Activated T-helper 1 cell treated with anti-CD3 and anti-CD28 coated beads, Interleukin-12 subunit alpha, Interleukin-12 subunit beta, Interleukin-2, Interleukin-4 antibody, amounts not matched to agents 30 ng/mL and 10 ng/mL and 1 ng/mL, durations not matched to agents 14 hours and 24 hours and 36 hours (primary cell): ENCODE measurements at regions of chr7 and their contacts with region 1.

Region 1: GRCh38 chr7:5822742-5823503 is 41.5 kb upstream of the RNF216 start:
- DNase-seq: peak; percentile 95
- H3K4me3 Mint-ChIP-seq: peak overlapping the region; percentile 87
- H3K27ac Mint-ChIP-seq: peak overlapping the region; percentile 82
- H3K4me1 Mint-ChIP-seq: peaks cover 12% of the 10 kb centered on the region
- H3K27me3 Mint-ChIP-seq: no peaks in the 10 kb centered on the region

Region 2: DNA sequence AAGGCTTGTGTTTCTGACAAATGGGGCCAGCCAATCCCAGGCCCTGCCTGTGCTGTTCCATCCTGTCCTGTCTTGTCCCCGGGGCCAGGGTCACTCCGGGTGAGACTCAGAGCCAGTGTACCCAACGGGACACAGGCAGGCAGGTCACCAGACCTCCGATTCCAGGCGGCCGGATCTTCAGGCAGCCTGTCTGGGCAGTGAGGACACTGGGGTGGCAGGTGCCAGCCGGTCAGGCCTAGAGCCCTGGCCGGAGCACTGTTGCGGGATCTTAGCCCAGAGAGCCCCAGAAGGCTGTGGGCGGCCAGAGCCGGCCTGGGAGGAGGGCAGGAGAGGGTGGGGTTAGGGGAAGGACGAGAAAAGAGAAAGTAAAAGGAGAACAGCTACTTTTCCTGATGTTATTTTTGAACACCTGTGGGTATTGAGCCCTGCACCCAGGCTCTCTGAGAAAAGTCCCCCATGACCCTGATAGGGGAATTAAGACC is 265.0 kb before region 1 on chr7:
- intact Hi-C with region 1: loop called (anchors 2 kb)
- DNase-seq: no peak
- H3K4me3 Mint-ChIP-seq: peak overlapping the region; percentile 79
- H3K27ac Mint-ChIP-seq: peak overlapping the region; percentile 70
- H3K4me1 Mint-ChIP-seq: peaks cover 35% of the 10 kb centered on the region
- H3K27me3 Mint-ChIP-seq: peaks cover 9% of the 10 kb centered on the region

Region 3: DNA sequence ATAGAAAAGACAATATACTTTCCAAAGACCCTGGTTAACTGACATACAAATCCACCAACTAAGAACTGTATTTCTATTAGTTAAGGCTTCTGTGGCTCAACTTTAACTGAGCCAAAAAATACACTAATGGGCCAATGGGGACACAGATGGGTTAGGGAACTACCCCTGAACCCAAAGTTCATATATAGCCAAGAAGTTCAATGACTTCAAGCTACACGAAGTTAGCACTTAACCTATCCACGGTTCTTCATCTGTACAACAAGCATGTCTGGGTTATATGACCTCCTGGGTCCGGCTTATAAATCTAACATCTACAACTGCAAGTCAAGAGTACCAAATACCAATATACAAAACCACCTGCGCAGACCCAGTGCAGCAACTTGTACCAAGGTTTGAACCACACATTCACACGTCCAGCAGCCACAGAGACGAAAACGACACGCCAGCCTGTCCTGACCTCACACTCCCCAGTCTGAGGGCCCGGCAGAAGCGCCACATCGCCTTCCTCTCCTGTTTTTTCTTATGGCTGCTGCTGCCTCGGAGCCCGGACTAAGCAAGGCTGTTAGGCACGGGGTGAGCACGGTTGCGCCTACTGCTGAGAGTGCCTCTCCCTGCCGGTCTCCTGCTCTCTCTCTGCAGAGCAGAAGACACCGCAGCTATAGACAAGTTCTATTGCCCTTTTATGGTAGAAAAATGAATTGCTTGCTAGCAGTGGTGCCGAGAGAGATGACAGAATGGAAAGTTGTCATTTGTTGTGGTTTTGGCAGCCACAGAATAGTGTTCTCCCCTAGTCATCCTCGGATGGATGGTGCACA is 127.8 kb before region 1 on chr7:
- intact Hi-C with region 1: loop called (anchors 2 kb)
- DNase-seq: peak; percentile 79
- H3K4me3 Mint-ChIP-seq: peak overlapping the region; percentile 84
- H3K27ac Mint-ChIP-seq: peak overlapping the region; percentile 95
- H3K4me1 Mint-ChIP-seq: peaks cover 93% of the 10 kb centered on the region
- H3K27me3 Mint-ChIP-seq: peaks cover 25% of the 10 kb centered on the region

Region 4: DNA sequence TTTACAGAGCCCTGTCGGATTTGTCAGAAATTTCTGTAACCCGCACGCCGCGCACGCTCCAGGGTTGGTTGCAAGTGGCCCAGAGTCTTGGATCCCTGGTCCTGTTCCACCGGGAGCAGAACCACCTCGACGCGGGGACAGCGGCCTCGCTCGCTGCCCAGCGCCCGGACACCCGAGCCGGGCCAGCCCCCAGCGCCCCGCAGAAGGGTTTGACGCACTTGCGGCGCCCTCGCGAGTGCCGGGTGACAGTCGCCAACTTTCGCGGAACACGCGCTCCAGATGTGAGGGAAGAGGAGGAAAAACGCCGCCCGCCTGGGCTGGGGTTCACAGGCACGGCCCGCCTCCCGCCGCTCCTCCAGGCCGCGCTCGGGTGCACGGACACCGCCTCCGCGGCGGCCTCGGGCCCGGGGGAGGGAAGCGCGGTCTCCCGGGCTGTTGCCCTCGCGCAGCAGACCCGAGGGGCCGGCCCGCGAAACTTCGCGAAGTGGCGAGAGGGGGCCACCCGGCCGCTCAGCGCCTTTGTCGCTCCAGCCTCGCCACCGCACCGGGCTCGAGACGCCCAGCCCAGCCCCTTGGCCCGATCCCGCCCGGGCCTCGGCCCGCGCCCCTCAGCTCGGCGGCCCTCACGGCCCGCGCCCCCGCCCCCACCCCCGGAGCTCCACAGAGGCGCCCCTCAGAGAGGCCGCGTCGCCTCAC is 42.0 kb before region 1 on chr7:
- intact Hi-C with region 1: loop called (anchors 1 kb)
- DNase-seq: peak; percentile 19
- H3K4me3 Mint-ChIP-seq: peak overlapping the region; percentile 86
- H3K27ac Mint-ChIP-seq: peak overlapping the region; percentile 86
- H3K4me1 Mint-ChIP-seq: peaks cover 31% of the 10 kb centered on the region
- H3K27me3 Mint-ChIP-seq: no peaks in the 10 kb centered on the region

Region 5: GRCh38 chr7:5838761-5839500 is 16.0 kb after region 1 on chr7:
- intact Hi-C with region 1: no loop called
- DNase-seq: no peak
- H3K4me3 Mint-ChIP-seq: no peak overlapping the region
- H3K27ac Mint-ChIP-seq: no peak overlapping the region
- H3K4me1 Mint-ChIP-seq: peaks cover 12% of the 10 kb centered on the region
- H3K27me3 Mint-ChIP-seq: no peaks in the 10 kb centered on the region

Region 6: DNA sequence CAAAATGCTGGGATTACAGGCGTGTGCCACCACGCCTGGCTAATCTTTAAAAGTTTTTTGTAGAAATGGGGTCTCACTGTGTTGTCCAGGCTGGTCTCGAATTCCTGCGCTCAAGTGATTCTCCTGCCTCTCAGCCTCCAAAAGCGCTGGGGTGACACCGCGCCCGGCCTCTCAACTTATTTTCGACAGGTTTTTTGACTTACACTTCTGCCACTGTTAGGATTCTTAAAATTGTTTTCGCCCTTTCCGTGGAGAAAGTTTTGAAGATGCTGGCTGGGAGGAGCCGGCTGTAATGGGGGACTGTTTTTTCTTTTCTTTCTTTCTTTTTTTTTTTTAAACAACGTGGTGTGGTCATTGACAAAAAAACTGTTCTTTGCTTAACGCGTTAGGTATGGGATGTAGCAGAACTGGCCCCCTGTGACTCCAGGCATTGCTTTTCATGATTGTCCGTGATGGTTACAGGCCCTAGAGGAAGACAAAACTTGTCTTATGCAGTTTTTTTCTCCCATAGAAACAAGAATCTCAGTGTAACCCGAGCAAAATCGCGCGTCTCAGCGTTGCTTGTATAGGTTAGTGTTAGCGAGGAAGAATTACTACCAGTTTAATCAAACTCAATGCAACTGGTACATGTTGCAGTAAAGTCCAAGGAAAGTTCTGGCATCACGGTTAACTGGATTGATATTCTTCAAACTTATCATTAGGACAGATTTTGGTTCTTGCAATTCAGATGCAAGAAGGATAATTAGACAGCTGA is 552.6 kb after region 1 on chr7:
- intact Hi-C with region 1: no loop called
- DNase-seq: peak; percentile 8
- H3K4me3 Mint-ChIP-seq: peak overlapping the region; percentile 94
- H3K27ac Mint-ChIP-seq: peak overlapping the region; percentile 93
- H3K4me1 Mint-ChIP-seq: peaks cover 30% of the 10 kb centered on the region
- H3K27me3 Mint-ChIP-seq: no peaks in the 10 kb centered on the region